Mucosa of descending colon (tissue), 3 donors: ENCODE measurements at regions of chr4 and their contacts with region 1.

Region 1: GRCh38 chr4:129641179-129641578 is 545.2 kb downstream of the C4orf33 start:
- DNase-seq: peak in 1 of 3 donors; percentile 84
- ATAC-seq: peak; percentile 63
- H3K4me3 ChIP-seq: no peak overlapping the region
- H3K4me1 ChIP-seq: no peaks in the 10 kb centered on the region
- CTCF ChIP-seq: peak; percentile 60

Region 2: GRCh38 chr4:129077326-129077725 is 563.9 kb before region 1 on chr4:
- intact Hi-C with region 1: no loop called
- DNase-seq: no peak
- ATAC-seq: no peak
- H3K4me3 ChIP-seq: no peak overlapping the region
- H3K4me1 ChIP-seq: no peaks in the 10 kb centered on the region
- CTCF ChIP-seq: no peak

Region 3: GRCh38 chr4:129344058-129344457 is 297.1 kb before region 1 on chr4:
- intact Hi-C with region 1: loop called in 1 of 2 experiments (anchors 10 kb)
- DNase-seq: peak in 1 of 3 donors; percentile 67
- ATAC-seq: peak; percentile 87
- H3K4me3 ChIP-seq: no peak overlapping the region
- H3K4me1 ChIP-seq: peaks cover 6% of the 10 kb centered on the region
- CTCF ChIP-seq: peak; percentile 46

Region 4: GRCh38 chr4:129362674-129363274 is 278.4 kb before region 1 on chr4:
- intact Hi-C with region 1: loop called (anchors 5 to 10 kb)
- DNase-seq: peak in 1 of 3 donors; percentile 78
- ATAC-seq: peak; percentile 67
- H3K4me3 ChIP-seq: no peak overlapping the region
- H3K4me1 ChIP-seq: no peaks in the 10 kb centered on the region
- CTCF ChIP-seq: peak; percentile 73

Region 5: DNA sequence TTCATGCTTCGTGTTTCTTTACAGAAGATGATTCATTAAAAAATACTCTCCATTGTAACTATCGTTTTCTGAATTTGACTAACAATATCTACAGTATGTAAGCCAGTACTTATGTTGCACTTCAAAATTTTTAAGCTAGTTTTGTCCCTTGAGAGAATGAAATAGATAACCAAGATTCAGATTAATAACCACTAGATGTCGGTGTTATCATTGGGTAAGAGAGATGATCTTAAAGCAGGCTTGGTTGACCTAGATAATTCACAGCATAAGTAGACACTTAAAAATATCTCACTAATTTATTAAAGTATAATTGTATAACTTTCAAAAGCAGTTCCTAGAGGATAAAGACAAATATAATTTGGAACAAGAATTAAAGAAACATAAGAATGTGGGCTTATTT is 114.4 kb before region 1 on chr4:
- intact Hi-C with region 1: no loop called
- DNase-seq: no peak
- ATAC-seq: no peak
- H3K4me3 ChIP-seq: no peak overlapping the region
- H3K4me1 ChIP-seq: no peaks in the 10 kb centered on the region
- CTCF ChIP-seq: no peak

Region 6: GRCh38 chr4:129804461-129804981 is 163.3 kb after region 1 on chr4:
- intact Hi-C with region 1: no loop called
- DNase-seq: no peak
- ATAC-seq: no peak
- H3K4me3 ChIP-seq: no peak overlapping the region
- H3K4me1 ChIP-seq: no peaks in the 10 kb centered on the region
- CTCF ChIP-seq: no peak